MCF 10A (cell line): ENCODE measurements at regions of chr2 and their contacts with region 1.

Region 1: GRCh38 chr2:144659731-144660275 is 139.9 kb upstream of the ZEB2 start:
- DNase-seq: peak; percentile 100
- H3K4me3 Mint-ChIP-seq: peak overlapping the region; percentile 22
- H3K27ac Mint-ChIP-seq: peak overlapping the region; percentile 96
- H3K4me1 Mint-ChIP-seq: peaks cover 40% of the 10 kb centered on the region
- H3K27me3 Mint-ChIP-seq: no peaks in the 10 kb centered on the region
- CTCF ChIP-seq: no peak

Region 2: DNA sequence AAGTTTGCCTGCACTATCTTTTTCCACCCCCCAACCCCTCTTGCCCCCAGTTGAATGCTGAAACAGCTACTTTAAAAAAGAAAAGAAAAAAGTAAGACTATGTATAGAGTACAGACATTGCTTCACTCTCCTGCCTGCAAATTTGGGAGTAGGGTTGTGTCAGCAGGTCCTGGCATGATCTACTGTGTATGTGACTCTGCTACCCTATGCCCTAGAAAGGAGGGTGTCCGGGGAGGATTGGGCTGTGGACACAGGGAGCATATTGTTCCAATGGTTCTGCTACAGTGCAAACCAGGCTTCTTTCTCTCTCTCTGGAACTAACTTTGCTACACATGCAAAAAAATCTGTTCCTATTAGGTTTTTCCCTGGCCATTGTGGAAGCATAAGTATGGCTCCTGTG is 130.0 kb before region 1 on chr2:
- CTCF ChIA-PET with region 1: no interaction called
- POLR2A ChIA-PET with region 1: interaction called, 14 read pairs
- intact Hi-C with region 1: no loop called
- DNase-seq: peak; percentile 55
- H3K4me3 Mint-ChIP-seq: no peak overlapping the region
- H3K27ac Mint-ChIP-seq: peak overlapping the region; percentile 46
- H3K4me1 Mint-ChIP-seq: peaks cover 13% of the 10 kb centered on the region
- H3K27me3 Mint-ChIP-seq: no peaks in the 10 kb centered on the region
- CTCF ChIP-seq: no peak

Region 3: GRCh38 chr2:144572977-144573376 is 86.8 kb before region 1 on chr2:
- CTCF ChIA-PET with region 1: no interaction called
- POLR2A ChIA-PET with region 1: no interaction called
- intact Hi-C with region 1: no loop called
- DNase-seq: no peak
- H3K4me3 Mint-ChIP-seq: no peak overlapping the region
- H3K27ac Mint-ChIP-seq: no peak overlapping the region
- H3K4me1 Mint-ChIP-seq: no peaks in the 10 kb centered on the region
- H3K27me3 Mint-ChIP-seq: no peaks in the 10 kb centered on the region
- CTCF ChIP-seq: no peak

Region 4: DNA sequence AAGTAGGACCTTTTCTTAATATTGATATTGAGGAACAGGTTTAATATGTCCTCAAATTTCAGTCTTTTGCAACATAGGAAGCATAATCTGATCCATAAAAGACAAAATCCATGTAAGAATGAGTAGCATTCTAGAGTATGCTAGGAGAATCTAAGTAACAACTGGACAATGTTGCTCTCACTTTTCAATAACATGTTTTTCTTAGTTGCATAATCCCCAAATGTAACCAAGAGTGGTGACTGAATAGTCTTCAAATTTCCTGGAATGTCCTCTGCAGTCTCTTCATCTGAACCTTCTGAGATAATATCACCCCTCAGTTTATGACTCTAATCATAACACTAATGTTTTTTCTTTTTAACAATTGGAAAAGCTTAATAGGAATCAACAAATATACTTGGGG is 29.9 kb before region 1 on chr2:
- CTCF ChIA-PET with region 1: interaction called, 3 read pairs
- POLR2A ChIA-PET with region 1: interaction called, 39 read pairs
- intact Hi-C with region 1: no loop called
- DNase-seq: no peak
- H3K4me3 Mint-ChIP-seq: no peak overlapping the region
- H3K27ac Mint-ChIP-seq: no peak overlapping the region
- H3K4me1 Mint-ChIP-seq: peaks cover 21% of the 10 kb centered on the region
- H3K27me3 Mint-ChIP-seq: no peaks in the 10 kb centered on the region
- CTCF ChIP-seq: no peak

Region 5: GRCh38 chr2:144675731-144676130 is 15.9 kb after region 1 on chr2:
- CTCF ChIA-PET with region 1: interaction called, 3 read pairs
- POLR2A ChIA-PET with region 1: interaction called, 16 read pairs
- intact Hi-C with region 1: no loop called
- DNase-seq: peak; percentile 13
- H3K4me3 Mint-ChIP-seq: no peak overlapping the region
- H3K27ac Mint-ChIP-seq: no peak overlapping the region
- H3K4me1 Mint-ChIP-seq: peaks cover 6% of the 10 kb centered on the region
- H3K27me3 Mint-ChIP-seq: no peaks in the 10 kb centered on the region
- CTCF ChIP-seq: no peak

Region 6: GRCh38 chr2:144703852-144704708 is 44.3 kb after region 1 on chr2:
- CTCF ChIA-PET with region 1: interaction called, 3 read pairs
- POLR2A ChIA-PET with region 1: interaction called, 15 read pairs
- intact Hi-C with region 1: no loop called
- DNase-seq: peak; percentile 92
- H3K4me3 Mint-ChIP-seq: no peak overlapping the region
- H3K27ac Mint-ChIP-seq: peak overlapping the region; percentile 73
- H3K4me1 Mint-ChIP-seq: peaks cover 22% of the 10 kb centered on the region
- H3K27me3 Mint-ChIP-seq: no peaks in the 10 kb centered on the region
- CTCF ChIP-seq: no peak